ENCODE measurements at regions of chr6 and their contacts with region 1.

Region 1: DNA sequence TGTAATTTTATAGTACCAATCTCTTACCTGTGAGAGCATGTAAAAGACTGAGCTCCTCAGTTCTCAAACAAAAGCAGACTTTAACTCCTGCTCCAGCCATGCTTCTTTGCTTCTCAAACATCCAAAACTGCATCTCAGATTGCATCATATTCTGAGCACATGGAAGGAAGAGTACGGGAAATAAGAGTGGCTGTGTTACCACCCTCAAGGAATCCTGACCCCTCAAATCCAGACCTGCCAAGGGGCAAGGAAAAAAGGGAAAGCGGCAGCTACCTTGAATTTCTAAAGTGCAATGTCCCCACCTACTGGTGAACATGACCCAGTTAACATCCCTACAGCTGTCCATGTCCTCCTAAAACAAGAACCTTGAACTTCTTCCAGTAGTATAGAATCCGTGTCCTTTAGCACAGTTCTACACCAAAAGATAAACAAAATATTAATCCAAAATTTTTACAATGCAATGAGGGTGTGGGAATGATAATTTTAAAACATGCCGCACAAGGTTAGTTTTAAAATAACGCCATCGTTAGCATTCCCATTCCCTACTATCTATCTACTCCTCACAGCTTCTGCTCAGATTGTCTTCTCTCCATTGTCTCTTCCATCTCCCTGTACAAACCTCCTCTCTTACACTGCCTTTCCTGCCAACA is 34.1 kb upstream of the HLA-DQB1 start:
- DNase-seq: peak; percentile 33
- H3K4me3 Mint-ChIP-seq: no peak overlapping the region
- H3K27ac Mint-ChIP-seq: no peak overlapping the region
- H3K4me1 Mint-ChIP-seq: no peaks in the 10 kb centered on the region
- H3K27me3 Mint-ChIP-seq: peaks cover 66% of the 10 kb centered on the region

Region 2: DNA sequence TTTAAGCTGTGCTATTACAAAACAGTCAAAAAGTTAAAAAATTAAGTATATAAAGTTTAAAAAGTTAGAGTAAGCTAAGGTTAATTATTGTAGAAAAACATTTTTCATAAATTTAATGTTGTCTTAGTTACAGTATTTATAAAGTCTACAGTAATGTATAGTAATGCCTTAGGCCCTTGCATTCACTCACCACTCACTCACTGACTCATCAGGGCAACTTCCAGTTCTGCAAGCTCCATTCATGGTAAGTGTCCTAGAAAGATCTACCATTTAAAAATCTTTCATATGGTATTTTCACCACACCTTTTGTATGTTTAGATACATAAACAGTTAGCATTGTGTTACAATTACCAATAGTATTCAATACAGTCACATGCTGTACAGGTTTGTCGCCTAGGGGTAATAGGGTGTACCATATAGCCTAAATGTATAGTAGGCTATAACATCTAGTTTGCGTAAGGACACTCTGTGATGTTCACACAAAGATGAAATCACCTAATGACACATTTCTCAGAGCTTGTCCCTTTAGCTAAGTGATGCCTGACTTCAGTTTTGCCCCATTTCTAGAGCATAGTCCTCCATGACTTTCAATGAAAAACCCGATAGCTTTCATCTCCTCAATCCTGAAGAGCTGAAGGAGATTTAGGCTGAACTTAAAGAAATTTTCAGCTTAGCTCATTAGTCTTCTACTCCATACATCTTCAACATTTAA is 275.8 kb before region 1 on chr6:
- CTCF ChIA-PET with region 1: interaction called, 12 read pairs
- POLR2A ChIA-PET with region 1: no interaction called
- DNase-seq: no peak
- H3K4me3 Mint-ChIP-seq: no peak overlapping the region
- H3K27ac Mint-ChIP-seq: no peak overlapping the region
- H3K4me1 Mint-ChIP-seq: peaks cover under 1% of the 10 kb centered on the region
- H3K27me3 Mint-ChIP-seq: peaks cover 43% of the 10 kb centered on the region

Region 3: GRCh38 chr6:32432050-32432450 is 268.5 kb before region 1 on chr6:
- CTCF ChIA-PET with region 1: interaction called, 13 read pairs
- POLR2A ChIA-PET with region 1: no interaction called
- DNase-seq: no peak
- H3K4me3 Mint-ChIP-seq: no peak overlapping the region
- H3K27ac Mint-ChIP-seq: no peak overlapping the region
- H3K4me1 Mint-ChIP-seq: peaks cover 4% of the 10 kb centered on the region
- H3K27me3 Mint-ChIP-seq: peaks cover 28% of the 10 kb centered on the region

Region 4: GRCh38 chr6:32622545-32623401 is 77.7 kb before region 1 on chr6:
- CTCF ChIA-PET with region 1: interaction called, 13 read pairs
- POLR2A ChIA-PET with region 1: interaction called, 3 read pairs
- DNase-seq: peak; percentile 49
- H3K4me3 Mint-ChIP-seq: peak overlapping the region; percentile 15
- H3K27ac Mint-ChIP-seq: peak overlapping the region; percentile 96
- H3K4me1 Mint-ChIP-seq: peaks cover 48% of the 10 kb centered on the region
- H3K27me3 Mint-ChIP-seq: no peaks in the 10 kb centered on the region

Region 5: GRCh38 chr6:32741031-32741960 is 40.8 kb after region 1 on chr6 and contains the start of gene HLA-DQA2:
- CTCF ChIA-PET with region 1: no interaction called
- POLR2A ChIA-PET with region 1: no interaction called
- DNase-seq: no peak
- H3K4me3 Mint-ChIP-seq: no peak within 1 kb of the TSS
- H3K27ac Mint-ChIP-seq: no peak within 1 kb of the TSS
- H3K4me1 Mint-ChIP-seq: no peaks in the 10 kb centered on the region
- H3K27me3 Mint-ChIP-seq: peaks cover 47% of the 10 kb centered on the region
- total RNA-seq, gene HLA-DQA2: not detected

Measured in activated CD4-positive, alpha-beta memory T cell treated with anti-CD3 and anti-CD28 coated beads, Interleukin-2, amount 10 ng/mL, durations not matched to agents 7 days and 5 days (primary cell).